SK-N-SH (cell line): ENCODE measurements at regions of chr2 and their contacts with region 1.

Region 1: GRCh38 chr2:7097348-7097895 is 180.2 kb downstream of the RNF144A start:
- DNase-seq: peak; percentile 89
- H3K4me3 ChIP-seq: peak overlapping the region; percentile 13 to 47; a peak in 2 of 4 replicates
- H3K27ac ChIP-seq: 0 out of 4 replicates have a peak overlapping the region, but pooled peaks of 1 of the 2 experiments have one; percentile 29
- H3K4me1 ChIP-seq: peaks cover 0 to 17% of the 10 kb centered on the region in 2 experiments; a peak in 2 of 4 replicates
- H3K27me3 ChIP-seq: no peaks in the 10 kb centered on the region
- CTCF ChIP-seq: peak; percentile 100
- EP300 ChIP-seq: no peak
- RAD21 ChIP-seq: peak; percentile 98

Region 2: GRCh38 chr2:6937157-6937556 is 160.3 kb before region 1 on chr2:
- CTCF ChIA-PET with region 1: no interaction called
- POLR2A ChIA-PET with region 1: no interaction called
- DNase-seq: no peak
- H3K4me3 ChIP-seq: no peak overlapping the region
- H3K27ac ChIP-seq: peak overlapping the region in 1 of 2 experiments; percentile 69; a peak in 2 of 4 replicates
- H3K4me1 ChIP-seq: peaks cover 0 to 24% of the 10 kb centered on the region in 2 experiments; a peak in 2 of 4 replicates
- H3K27me3 ChIP-seq: no peaks in the 10 kb centered on the region
- CTCF ChIP-seq: no peak
- EP300 ChIP-seq: no peak
- RAD21 ChIP-seq: no peak

Region 3: GRCh38 chr2:7037340-7038333 is 59.8 kb before region 1 on chr2:
- CTCF ChIA-PET with region 1: interaction called, 16 read pairs
- POLR2A ChIA-PET with region 1: no interaction called
- DNase-seq: peak; percentile 87
- H3K4me3 ChIP-seq: no peak overlapping the region
- H3K27ac ChIP-seq: peak overlapping the region in 1 of 2 experiments; percentile 31; a peak in 1 of 4 replicates
- H3K4me1 ChIP-seq: peaks cover 0 to 29% of the 10 kb centered on the region in 2 experiments; a peak in 2 of 4 replicates
- H3K27me3 ChIP-seq: no peaks in the 10 kb centered on the region
- CTCF ChIP-seq: peak; percentile 91
- EP300 ChIP-seq: no peak
- RAD21 ChIP-seq: peak; percentile 98

Region 4: DNA sequence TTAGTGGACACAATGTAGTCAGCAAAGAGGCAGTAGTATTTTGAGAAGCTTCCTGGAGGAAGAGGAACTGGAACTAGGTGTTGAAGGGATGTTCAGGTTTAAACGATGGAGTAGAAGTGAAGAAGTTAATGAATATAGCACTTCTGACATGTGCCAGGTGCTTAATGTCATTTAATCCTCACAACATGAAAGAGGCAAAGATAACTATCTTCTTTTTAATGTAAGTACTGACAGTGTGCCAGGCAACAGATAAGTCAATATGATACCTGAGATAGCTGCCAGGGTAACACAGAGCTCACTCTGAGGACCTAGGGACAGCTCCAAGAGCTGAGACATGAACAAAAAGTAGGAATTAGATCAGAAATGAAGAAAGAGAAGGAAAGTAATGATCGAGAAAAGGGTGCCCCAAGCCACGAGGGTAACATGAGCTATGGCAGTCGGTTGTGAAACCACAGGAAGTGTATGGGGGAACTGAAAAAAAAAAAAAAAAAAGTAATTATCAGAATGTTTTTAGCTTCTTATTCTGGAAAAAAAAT is 39.5 kb before region 1 on chr2:
- CTCF ChIA-PET with region 1: interaction called, 39 read pairs
- POLR2A ChIA-PET with region 1: no interaction called
- DNase-seq: no peak
- H3K4me3 ChIP-seq: no peak overlapping the region
- H3K27ac ChIP-seq: peak overlapping the region in 1 of 2 experiments; percentile 45; a peak in 2 of 4 replicates
- H3K4me1 ChIP-seq: peaks cover 0 to 50% of the 10 kb centered on the region in 2 experiments; a peak in 2 of 4 replicates
- H3K27me3 ChIP-seq: no peaks in the 10 kb centered on the region
- CTCF ChIP-seq: no peak
- EP300 ChIP-seq: peak in 1 of 2 experiments; percentile 85; a peak in 2 of 4 replicates
- RAD21 ChIP-seq: no peak

Region 5: DNA sequence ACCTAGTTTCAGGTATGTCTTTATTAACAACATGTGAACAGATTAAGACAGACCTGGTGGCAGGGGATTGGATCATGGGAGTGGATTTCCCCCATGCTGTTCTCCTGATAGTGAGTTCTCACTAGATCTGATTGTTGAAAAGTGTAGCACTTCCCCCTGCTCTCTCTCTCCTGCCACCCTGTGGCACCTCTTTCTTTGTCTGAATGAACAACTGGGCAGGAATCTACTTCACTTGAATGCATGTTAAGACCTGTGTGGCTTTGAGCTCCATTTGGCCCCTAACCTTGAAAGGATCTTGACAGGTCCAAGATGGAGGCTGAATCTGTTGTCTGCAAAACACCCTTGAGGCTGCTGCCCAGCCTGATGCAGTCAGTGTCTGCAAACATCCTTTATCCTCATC is 14.2 kb after region 1 on chr2:
- CTCF ChIA-PET with region 1: interaction called, 106 read pairs
- POLR2A ChIA-PET with region 1: no interaction called
- DNase-seq: no peak
- H3K4me3 ChIP-seq: no peak overlapping the region
- H3K27ac ChIP-seq: no peak overlapping the region
- H3K4me1 ChIP-seq: no peaks in the 10 kb centered on the region
- H3K27me3 ChIP-seq: no peaks in the 10 kb centered on the region
- CTCF ChIP-seq: peak; percentile 26; the same call in 1 of the 2 replicates
- EP300 ChIP-seq: no peak
- RAD21 ChIP-seq: peak; percentile 53

Region 6: GRCh38 chr2:7417845-7418742 is 320.7 kb after region 1 on chr2:
- CTCF ChIA-PET with region 1: interaction called, 18 read pairs
- POLR2A ChIA-PET with region 1: no interaction called
- DNase-seq: no peak
- H3K4me3 ChIP-seq: no peak overlapping the region
- H3K27ac ChIP-seq: no peak overlapping the region
- H3K4me1 ChIP-seq: no peaks in the 10 kb centered on the region; a peak in 3 of 4 replicates
- H3K27me3 ChIP-seq: 0 out of 2 replicates have a peak, but pooled peaks cover 5% of the 10 kb centered on the region
- CTCF ChIP-seq: no peak
- EP300 ChIP-seq: no peak
- RAD21 ChIP-seq: no peak